K562 (cell line): ENCODE measurements at regions of chr4 and their contacts with region 1.

Region 1: GRCh38 chr4:56435306-56435926 is at the start of gene PPAT:
- DNase-seq: peak; percentile 93 to 99 (median 96)
- ATAC-seq: peak; percentile 82
- H3K4me3 ChIP-seq: peak within 1 kb of the TSS; percentile 89
- H3K27ac ChIP-seq: peak within 1 kb of the TSS; percentile 96
- H3K4me1 ChIP-seq: peaks cover 16 to 21% of the 10 kb centered on the region in 2 experiments; a peak in 3 of 5 replicates
- H3K27me3 ChIP-seq: no peaks in the 10 kb centered on the region
- CTCF ChIP-seq: peak in 2 of 3 experiments; percentile 19 to 29; a peak in 1 of 6 replicates
- EP300 ChIP-seq: no peak
- POLR2A ChIP-seq: peak; percentile 86
- RAD21 ChIP-seq: no peak
- polyA plus RNA-seq, gene PPAT: 49.3 to 55.5 TPM

Region 2: DNA sequence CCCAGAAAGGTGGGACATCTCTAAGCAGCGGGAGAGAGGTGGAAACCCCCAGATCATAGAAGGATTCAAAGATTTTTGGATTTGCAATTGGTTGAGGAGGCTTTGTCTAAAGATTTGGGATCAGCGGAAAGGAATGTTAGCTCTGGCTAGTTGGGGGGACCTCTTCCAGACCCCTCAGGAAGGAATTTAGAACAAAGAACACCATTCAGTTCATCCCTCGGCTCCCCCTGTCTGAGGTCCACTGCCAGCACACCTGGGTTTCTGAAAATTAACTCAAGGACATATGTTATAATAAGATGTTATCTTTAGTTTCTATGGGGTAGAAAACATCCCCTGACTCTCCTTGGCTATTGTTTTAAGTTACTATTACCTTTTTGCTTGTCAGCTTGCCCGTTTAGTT is 323.0 kb before region 1 on chr4:
- CTCF ChIA-PET with region 1: no interaction called
- POLR2A ChIA-PET with region 1: no interaction called
- in situ Hi-C with region 1: no loop called
- intact Hi-C with region 1: no loop called
- DNase-seq: no peak
- ATAC-seq: no peak
- H3K4me3 ChIP-seq: no peak overlapping the region
- H3K27ac ChIP-seq: no peak overlapping the region
- H3K4me1 ChIP-seq: no peaks in the 10 kb centered on the region
- H3K27me3 ChIP-seq: peaks cover 16 to 20% of the 10 kb centered on the region in 2 experiments
- CTCF ChIP-seq: no peak
- EP300 ChIP-seq: no peak
- POLR2A ChIP-seq: no peak
- RAD21 ChIP-seq: no peak

Region 3: GRCh38 chr4:56371426-56372220 is 63.8 kb before region 1 on chr4:
- CTCF ChIA-PET with region 1: no interaction called
- POLR2A ChIA-PET with region 1: no interaction called
- in situ Hi-C with region 1: no loop called
- intact Hi-C with region 1: no loop called
- DNase-seq: no peak
- ATAC-seq: no peak
- H3K4me3 ChIP-seq: no peak overlapping the region
- H3K27ac ChIP-seq: no peak overlapping the region
- H3K4me1 ChIP-seq: no peaks in the 10 kb centered on the region; a peak in 1 of 5 replicates
- H3K27me3 ChIP-seq: no peaks in the 10 kb centered on the region
- CTCF ChIP-seq: no peak
- EP300 ChIP-seq: no peak
- POLR2A ChIP-seq: no peak
- RAD21 ChIP-seq: no peak

Region 4: GRCh38 chr4:56387023-56388001 is 48.1 kb before region 1 on chr4 and contains the start of gene AASDH:
- CTCF ChIA-PET with region 1: no interaction called
- POLR2A ChIA-PET with region 1: interaction called, 13 read pairs
- in situ Hi-C with region 1: no loop called
- intact Hi-C with region 1: loop called (anchors 2 kb)
- DNase-seq: peak; percentile 86 to 96 (median 89)
- ATAC-seq: peak; percentile 88
- H3K4me3 ChIP-seq: peak within 1 kb of the TSS; percentile 61
- H3K27ac ChIP-seq: peak within 1 kb of the TSS; percentile 89
- H3K4me1 ChIP-seq: peaks cover 3 to 17% of the 10 kb centered on the region in 2 experiments; a peak in 2 of 5 replicates
- H3K27me3 ChIP-seq: no peaks in the 10 kb centered on the region
- CTCF ChIP-seq: peak in 2 of 3 experiments; percentile 4 to 10; a peak in 1 of 6 replicates
- EP300 ChIP-seq: peak; percentile 51
- POLR2A ChIP-seq: peak; percentile 98
- RAD21 ChIP-seq: no peak
- polyA plus RNA-seq, gene AASDH: 16.8 to 29.7 TPM

Region 5: DNA sequence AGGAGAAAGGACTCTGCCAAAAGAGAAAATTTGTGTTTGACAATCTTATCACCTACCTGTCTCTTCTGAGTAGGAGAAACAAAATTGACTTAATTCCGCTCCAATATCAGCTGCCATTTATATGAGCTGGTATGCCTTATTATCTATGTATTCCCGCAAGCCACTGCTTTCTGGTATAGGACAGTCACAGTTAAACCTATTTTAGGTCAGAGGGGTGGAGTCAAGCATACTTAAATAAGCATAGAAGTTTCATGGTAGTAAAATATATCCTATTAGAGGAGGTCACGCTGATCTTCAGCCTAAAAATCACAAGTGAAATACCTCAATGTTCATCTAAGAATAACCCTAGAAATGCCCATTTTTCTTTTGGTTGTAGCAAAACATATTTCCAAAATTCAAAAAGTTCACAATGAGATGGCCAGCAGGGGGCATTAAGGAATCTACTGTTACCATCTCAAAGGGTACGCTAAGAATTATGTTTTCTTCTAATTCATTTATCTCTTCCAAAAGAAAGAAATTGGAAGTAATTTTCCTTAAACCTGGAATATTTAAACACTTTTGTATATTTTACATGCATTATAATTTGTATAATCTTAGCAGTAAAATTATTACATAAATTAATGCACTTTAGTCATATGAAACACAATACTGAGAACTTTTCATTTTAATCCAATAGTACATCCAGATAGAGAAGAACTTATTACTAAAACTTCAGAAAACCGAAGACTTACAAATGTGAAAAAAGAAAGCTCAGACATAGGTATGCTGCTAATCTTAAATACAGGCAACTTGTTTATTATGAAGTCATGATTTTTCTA is 10.5 kb before region 1 on chr4:
- CTCF ChIA-PET with region 1: no interaction called
- POLR2A ChIA-PET with region 1: interaction called, 10 read pairs
- in situ Hi-C with region 1: no loop called
- intact Hi-C with region 1: no loop called
- DNase-seq: peak; percentile 20 to 51 (median 35)
- ATAC-seq: peak; percentile 75
- H3K4me3 ChIP-seq: no peak overlapping the region
- H3K27ac ChIP-seq: no peak overlapping the region
- H3K4me1 ChIP-seq: peaks cover 0 to 9% of the 10 kb centered on the region in 2 experiments; a peak in 3 of 5 replicates
- H3K27me3 ChIP-seq: no peaks in the 10 kb centered on the region
- CTCF ChIP-seq: peak; percentile 31 to 67 (median 54); a peak in 5 of 6 replicates
- EP300 ChIP-seq: no peak
- POLR2A ChIP-seq: no peak
- RAD21 ChIP-seq: peak; percentile 48 to 54

Region 6: GRCh38 chr4:56445699-56446098 is 10.3 kb after region 1 on chr4:
- CTCF ChIA-PET with region 1: no interaction called
- POLR2A ChIA-PET with region 1: interaction called, 17 read pairs
- in situ Hi-C with region 1: no loop called
- intact Hi-C with region 1: no loop called
- DNase-seq: no peak
- ATAC-seq: peak; percentile 90
- H3K4me3 ChIP-seq: no peak overlapping the region
- H3K27ac ChIP-seq: no peak overlapping the region
- H3K4me1 ChIP-seq: peaks cover 0 to 3% of the 10 kb centered on the region in 2 experiments; a peak in 2 of 5 replicates
- H3K27me3 ChIP-seq: no peaks in the 10 kb centered on the region
- CTCF ChIP-seq: no peak
- EP300 ChIP-seq: peak; percentile 19; the same call in 1 of the 2 replicates
- POLR2A ChIP-seq: no peak
- RAD21 ChIP-seq: no peak

Region 7: GRCh38 chr4:56467284-56468096 is 32.1 kb after region 1 on chr4 and contains the start of gene SRP72:
- CTCF ChIA-PET with region 1: no interaction called
- POLR2A ChIA-PET with region 1: interaction called, 47 read pairs
- in situ Hi-C with region 1: no loop called
- intact Hi-C with region 1: loop called (anchors 2 kb)
- DNase-seq: peak; percentile 87 to 96 (median 90)
- ATAC-seq: peak; percentile 89
- H3K4me3 ChIP-seq: peak within 1 kb of the TSS; percentile 95
- H3K27ac ChIP-seq: peak within 1 kb of the TSS; percentile 99
- H3K4me1 ChIP-seq: peaks cover 0 to 15% of the 10 kb centered on the region in 2 experiments; a peak in 3 of 5 replicates
- H3K27me3 ChIP-seq: no peaks in the 10 kb centered on the region
- CTCF ChIP-seq: no peak
- EP300 ChIP-seq: peak; percentile 66
- POLR2A ChIP-seq: peak; percentile 96
- RAD21 ChIP-seq: no peak
- polyA plus RNA-seq, gene SRP72: 300 to 341 TPM